ENCODE measurements at regions of chr16 and their contacts with region 1.

Region 1: GRCh38 chr16:65671-66137 is 6.7 kb downstream of the RHBDF1 start:
- DNase-seq: peak; percentile 95
- H3K4me3 ChIP-seq: peak overlapping the region in 1 of 2 experiments; percentile 44; a peak in 1 of 4 replicates
- H3K27ac ChIP-seq: no peak overlapping the region
- H3K4me1 ChIP-seq: peaks cover 0 to 3% of the 10 kb centered on the region in 2 experiments; a peak in 2 of 4 replicates
- H3K27me3 ChIP-seq: no peaks in the 10 kb centered on the region
- CTCF ChIP-seq: peak; percentile 91
- EP300 ChIP-seq: no peak
- RAD21 ChIP-seq: peak; percentile 96

Region 2: DNA sequence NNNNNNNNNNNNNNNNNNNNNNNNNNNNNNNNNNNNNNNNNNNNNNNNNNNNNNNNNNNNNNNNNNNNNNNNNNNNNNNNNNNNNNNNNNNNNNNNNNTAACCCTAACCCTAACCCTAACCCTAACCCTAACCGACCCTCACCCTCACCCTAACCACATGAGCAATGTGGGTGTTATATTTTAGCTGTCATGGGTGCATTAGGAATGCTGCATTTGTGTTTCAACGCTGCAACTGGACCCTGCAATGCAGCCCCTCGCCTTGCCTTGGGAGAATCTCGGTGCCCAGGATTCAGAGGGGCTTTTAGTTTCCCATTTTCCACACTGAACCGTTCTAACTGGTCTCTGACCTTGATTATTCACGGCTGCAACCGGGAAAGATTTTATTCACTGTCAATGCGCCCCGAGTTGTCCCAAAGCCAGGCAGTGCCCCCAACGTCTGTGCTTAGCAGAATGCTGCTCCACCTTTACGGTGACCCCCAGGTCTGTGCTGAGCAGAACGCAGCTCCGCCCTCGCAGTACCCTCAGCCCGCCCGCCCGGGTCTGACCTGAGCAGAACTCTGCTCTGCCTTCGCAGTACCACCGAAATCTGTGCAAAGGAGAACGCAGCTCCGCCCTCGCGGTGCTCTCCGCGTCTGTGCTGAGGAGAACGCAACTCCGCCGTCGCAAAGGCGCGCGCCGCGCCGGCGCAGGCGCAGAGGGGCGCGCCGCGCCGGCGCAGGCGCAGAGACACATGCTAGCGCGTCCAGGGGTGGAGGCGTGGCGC is 55.6 kb before region 1 on chr16:
- CTCF ChIA-PET with region 1: no interaction called
- POLR2A ChIA-PET with region 1: no interaction called
- DNase-seq: no peak
- H3K4me3 ChIP-seq: peak overlapping the region in 1 of 2 experiments; percentile 37; a peak in 2 of 4 replicates
- H3K27ac ChIP-seq: no peak overlapping the region
- H3K4me1 ChIP-seq: no peaks in the 10 kb centered on the region
- H3K27me3 ChIP-seq: no peaks in the 10 kb centered on the region
- CTCF ChIP-seq: no peak
- EP300 ChIP-seq: no peak
- RAD21 ChIP-seq: no peak

Region 3: GRCh38 chr16:45454-45853 is 20.2 kb before region 1 on chr16:
- CTCF ChIA-PET with region 1: interaction called, 10 read pairs
- POLR2A ChIA-PET with region 1: no interaction called
- DNase-seq: no peak
- H3K4me3 ChIP-seq: no peak overlapping the region
- H3K27ac ChIP-seq: no peak overlapping the region
- H3K4me1 ChIP-seq: no peaks in the 10 kb centered on the region
- H3K27me3 ChIP-seq: no peaks in the 10 kb centered on the region
- CTCF ChIP-seq: no peak
- EP300 ChIP-seq: no peak
- RAD21 ChIP-seq: no peak

Region 4: GRCh38 chr16:53346-54236 is 12.1 kb before region 1 on chr16 and contains the starts of genes POLR3K and SNRNP25:
- CTCF ChIA-PET with region 1: interaction called, 30 read pairs
- POLR2A ChIA-PET with region 1: interaction called, 3 read pairs
- DNase-seq: peak; percentile 100
- H3K4me3 ChIP-seq: peak within 1 kb of the TSS; percentile 67 to 87
- H3K27ac ChIP-seq: peak within 1 kb of the TSS; percentile 70 to 72
- H3K4me1 ChIP-seq: peaks cover 3 to 9% of the 10 kb centered on the region in 2 experiments; a peak in 1 of 4 replicates
- H3K27me3 ChIP-seq: no peaks in the 10 kb centered on the region
- CTCF ChIP-seq: no peak
- EP300 ChIP-seq: no peak
- RAD21 ChIP-seq: no peak
- polyA plus RNA-seq, gene POLR3K: 43.0 and 54.5 TPM in 2 replicates
- polyA plus RNA-seq, gene SNRNP25: 61.9 and 73.4 TPM in 2 replicates

Region 5: DNA sequence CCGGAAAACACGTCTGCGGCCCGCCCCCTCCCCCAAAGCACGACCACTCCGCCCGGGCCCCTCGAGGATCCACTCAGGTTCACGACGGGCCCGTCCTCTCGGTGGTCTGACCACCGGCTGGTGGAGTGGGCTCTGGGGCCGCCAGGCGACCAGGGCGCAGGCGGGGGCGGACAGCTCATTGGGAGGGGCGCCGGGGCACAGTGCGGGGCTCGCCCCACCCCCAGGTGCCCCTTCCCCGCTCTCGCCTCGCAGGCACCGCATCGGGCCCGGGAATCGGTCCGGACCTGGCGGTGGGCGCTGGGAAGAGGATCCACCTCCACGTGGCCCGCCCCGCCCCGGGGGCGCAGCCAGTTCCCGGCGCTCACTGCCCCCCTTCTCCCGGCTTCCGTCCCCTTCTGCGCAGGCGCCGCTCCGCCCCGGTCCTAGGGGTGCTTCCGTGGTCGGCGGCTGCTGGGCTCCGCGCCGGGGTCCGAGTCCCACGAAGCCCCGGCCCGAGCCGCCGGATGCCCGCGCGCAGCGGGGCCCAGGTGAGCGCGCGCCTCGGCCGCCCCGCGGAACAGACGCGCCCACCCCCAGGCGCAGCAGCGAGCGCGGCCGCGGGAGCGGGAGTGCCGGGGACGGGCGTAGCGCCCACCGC is 12.2 kb after region 1 on chr16 and contains the start of gene MPG:
- CTCF ChIA-PET with region 1: interaction called, 793 read pairs
- POLR2A ChIA-PET with region 1: interaction called, 4 read pairs
- DNase-seq: peak; percentile 100
- H3K4me3 ChIP-seq: peak within 1 kb of the TSS; percentile 76 to 92
- H3K27ac ChIP-seq: peak within 1 kb of the TSS; percentile 58 to 84
- H3K4me1 ChIP-seq: peaks cover 20 to 51% of the 10 kb centered on the region in 2 experiments
- H3K27me3 ChIP-seq: no peaks in the 10 kb centered on the region
- CTCF ChIP-seq: no peak
- EP300 ChIP-seq: no peak
- RAD21 ChIP-seq: no peak
- polyA plus RNA-seq, gene MPG: 93.3 and 98.3 TPM in 2 replicates

Region 6: GRCh38 chr16:96935-97381 is 31.3 kb after region 1 on chr16:
- CTCF ChIA-PET with region 1: interaction called, 793 read pairs
- POLR2A ChIA-PET with region 1: interaction called, 5 read pairs
- DNase-seq: peak; percentile 95
- H3K4me3 ChIP-seq: no peak overlapping the region; a peak in 1 of 4 replicates
- H3K27ac ChIP-seq: no peak overlapping the region
- H3K4me1 ChIP-seq: peaks cover 0 to 8% of the 10 kb centered on the region in 2 experiments; a peak in 1 of 4 replicates
- H3K27me3 ChIP-seq: no peaks in the 10 kb centered on the region
- CTCF ChIP-seq: peak; percentile 99
- EP300 ChIP-seq: no peak
- RAD21 ChIP-seq: peak; percentile 83

Region 7: GRCh38 chr16:117379-118365 is 52.0 kb after region 1 on chr16:
- CTCF ChIA-PET with region 1: interaction called, 22 read pairs
- POLR2A ChIA-PET with region 1: no interaction called
- DNase-seq: peak; percentile 87
- H3K4me3 ChIP-seq: no peak overlapping the region
- H3K27ac ChIP-seq: no peak overlapping the region
- H3K4me1 ChIP-seq: peaks cover 6 to 14% of the 10 kb centered on the region in 2 experiments; a peak in 3 of 4 replicates
- H3K27me3 ChIP-seq: no peaks in the 10 kb centered on the region
- CTCF ChIP-seq: peak; percentile 74
- EP300 ChIP-seq: no peak
- RAD21 ChIP-seq: peak; percentile 62

Region 8: GRCh38 chr16:290681-291405 is 225.1 kb after region 1 on chr16:
- CTCF ChIA-PET with region 1: no interaction called
- POLR2A ChIA-PET with region 1: no interaction called
- DNase-seq: no peak
- H3K4me3 ChIP-seq: no peak overlapping the region
- H3K27ac ChIP-seq: no peak overlapping the region
- H3K4me1 ChIP-seq: no peaks in the 10 kb centered on the region
- H3K27me3 ChIP-seq: no peaks in the 10 kb centered on the region
- CTCF ChIP-seq: no peak
- EP300 ChIP-seq: no peak
- RAD21 ChIP-seq: no peak

Region 9: DNA sequence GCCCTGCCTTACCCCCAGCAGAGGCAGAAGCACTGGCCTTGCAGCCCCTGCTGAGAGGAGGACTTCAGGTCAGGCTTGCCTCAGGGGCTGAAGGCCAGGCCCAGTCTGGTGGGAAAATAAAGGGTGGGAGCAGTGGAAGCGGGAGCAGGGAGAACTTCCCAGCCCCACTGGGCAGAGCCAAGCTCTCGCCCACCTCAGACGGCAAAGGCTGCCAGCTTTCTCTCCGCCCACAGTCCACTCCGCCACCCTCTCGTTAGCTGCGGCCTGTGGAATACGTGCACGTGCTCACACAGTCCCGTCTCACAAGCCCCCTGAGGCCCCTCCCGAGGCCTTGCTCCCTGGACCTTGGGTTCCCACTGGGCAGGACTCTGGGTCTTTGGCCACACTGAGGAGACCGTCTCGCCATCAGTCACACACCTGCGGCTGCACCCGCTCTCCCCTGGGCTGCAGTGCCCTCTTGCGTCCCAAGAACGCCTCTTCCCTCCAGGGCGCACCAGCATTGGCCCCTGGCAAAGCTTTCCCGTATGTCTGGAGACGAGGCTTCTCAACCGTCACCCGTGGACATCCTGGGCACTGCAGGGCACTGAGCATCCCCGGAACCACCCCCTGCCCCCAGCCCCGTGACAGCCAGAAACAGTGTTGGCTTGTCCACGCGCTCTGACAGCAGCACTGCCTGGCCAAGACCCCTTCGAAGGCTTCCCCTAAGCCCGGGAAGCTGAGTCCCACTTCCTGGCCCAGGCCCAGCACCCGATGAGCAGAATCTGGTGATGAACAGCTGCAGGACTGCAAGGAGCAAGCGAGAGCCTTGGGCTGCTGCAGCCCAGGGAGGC is 296.4 kb after region 1 on chr16:
- CTCF ChIA-PET with region 1: interaction called, 46 read pairs
- POLR2A ChIA-PET with region 1: no interaction called
- DNase-seq: peak; percentile 90
- H3K4me3 ChIP-seq: no peak overlapping the region
- H3K27ac ChIP-seq: no peak overlapping the region
- H3K4me1 ChIP-seq: peaks cover 0 to 18% of the 10 kb centered on the region in 2 experiments; a peak in 1 of 4 replicates
- H3K27me3 ChIP-seq: no peaks in the 10 kb centered on the region
- CTCF ChIP-seq: peak; percentile 69
- EP300 ChIP-seq: no peak
- RAD21 ChIP-seq: peak; percentile 93